ENCODE measurements at regions of chr4 and their contacts with region 1.

Region 1: DNA sequence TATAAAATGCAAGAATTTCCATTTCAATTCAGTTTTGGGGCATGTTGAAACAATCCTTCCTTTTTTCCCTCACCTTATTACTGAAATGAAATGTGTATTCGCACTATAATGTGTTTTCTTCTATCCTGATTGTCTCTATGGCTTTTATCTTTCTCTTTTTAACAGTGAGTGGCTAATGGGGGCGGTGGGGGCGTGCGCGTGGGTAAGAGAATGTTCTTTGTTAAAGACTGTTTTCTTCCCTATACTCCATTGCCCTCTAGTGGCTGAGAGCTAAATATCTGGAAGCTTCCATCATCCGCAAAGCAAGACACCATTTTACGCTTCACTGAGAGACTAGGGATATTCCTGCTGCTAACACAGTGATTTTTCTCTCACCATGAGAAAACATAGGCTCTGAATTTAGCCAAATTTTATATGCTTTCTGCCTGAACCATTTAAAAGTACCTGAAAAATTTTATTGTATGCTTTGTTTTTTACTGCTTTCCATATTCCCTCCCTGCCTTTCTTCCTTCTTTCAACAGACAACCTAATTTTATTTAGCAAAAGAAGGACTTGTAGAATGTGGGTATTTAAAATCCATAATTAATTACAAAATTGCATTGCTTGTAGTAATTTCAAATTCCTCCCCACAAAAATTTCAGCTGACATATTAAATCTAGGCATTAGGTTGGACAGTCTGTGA is 194.0 kb downstream of the GASK1B start:
- DNase-seq: peak; percentile 29
- H3K4me3 ChIP-seq: peak overlapping the region; percentile 31
- H3K27ac ChIP-seq: no peak overlapping the region
- H3K4me1 ChIP-seq: no peaks in the 10 kb centered on the region
- H3K27me3 ChIP-seq: no peaks in the 10 kb centered on the region
- CTCF ChIP-seq: peak; percentile 85

Region 2: DNA sequence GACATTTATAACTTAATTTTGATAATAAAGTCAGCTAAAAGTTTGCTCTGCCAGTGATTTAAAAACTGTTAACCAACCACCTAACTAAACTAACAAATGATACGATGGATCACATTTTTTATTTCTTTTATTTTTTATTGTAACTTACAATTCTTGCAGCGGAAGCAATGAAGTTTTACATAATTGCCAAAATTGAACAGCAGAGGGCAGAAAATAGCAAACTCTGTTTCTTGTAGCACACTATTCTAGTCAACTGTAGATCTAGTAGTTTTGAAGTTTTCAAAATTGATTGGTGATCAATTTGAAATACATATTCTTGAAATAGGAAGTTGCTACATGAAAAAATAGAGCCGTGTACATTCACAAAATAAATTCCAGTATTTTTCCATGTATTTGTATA is 761.1 kb before region 1 on chr4:
- intact Hi-C with region 1: loop called (anchors 5 kb)
- DNase-seq: no peak
- H3K4me3 ChIP-seq: no peak overlapping the region
- H3K27ac ChIP-seq: no peak overlapping the region
- H3K4me1 ChIP-seq: peaks cover 12% of the 10 kb centered on the region
- H3K27me3 ChIP-seq: peaks cover 50% of the 10 kb centered on the region
- CTCF ChIP-seq: peak; percentile 33

Region 3: GRCh38 chr4:157421365-157421764 is 557.5 kb before region 1 on chr4:
- intact Hi-C with region 1: no loop called
- DNase-seq: no peak
- H3K4me3 ChIP-seq: no peak overlapping the region
- H3K27ac ChIP-seq: no peak overlapping the region
- H3K4me1 ChIP-seq: no peaks in the 10 kb centered on the region
- H3K27me3 ChIP-seq: no peaks in the 10 kb centered on the region
- CTCF ChIP-seq: no peak

Region 4: DNA sequence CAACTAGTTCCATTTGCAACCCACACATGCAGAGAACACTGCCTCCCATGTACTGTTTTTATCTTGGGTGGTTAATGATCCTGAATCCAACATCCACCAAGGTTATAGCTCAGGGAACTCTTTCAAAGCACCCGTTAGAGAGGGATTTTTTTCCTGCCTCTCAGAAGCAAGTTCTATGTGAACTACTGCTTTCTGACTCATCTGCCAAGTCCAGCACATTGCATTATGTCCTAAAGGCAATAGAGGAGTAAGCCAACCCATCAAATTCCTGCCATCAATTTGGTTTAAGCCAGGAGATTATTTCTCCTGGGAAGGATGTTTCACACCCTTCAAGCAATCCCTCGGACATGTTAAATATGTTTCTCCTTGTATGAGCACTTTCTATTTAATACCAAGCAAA is 140.5 kb before region 1 on chr4:
- intact Hi-C with region 1: no loop called
- DNase-seq: no peak
- H3K4me3 ChIP-seq: no peak overlapping the region
- H3K27ac ChIP-seq: no peak overlapping the region
- H3K4me1 ChIP-seq: no peaks in the 10 kb centered on the region
- H3K27me3 ChIP-seq: no peaks in the 10 kb centered on the region
- CTCF ChIP-seq: no peak

Region 5: DNA sequence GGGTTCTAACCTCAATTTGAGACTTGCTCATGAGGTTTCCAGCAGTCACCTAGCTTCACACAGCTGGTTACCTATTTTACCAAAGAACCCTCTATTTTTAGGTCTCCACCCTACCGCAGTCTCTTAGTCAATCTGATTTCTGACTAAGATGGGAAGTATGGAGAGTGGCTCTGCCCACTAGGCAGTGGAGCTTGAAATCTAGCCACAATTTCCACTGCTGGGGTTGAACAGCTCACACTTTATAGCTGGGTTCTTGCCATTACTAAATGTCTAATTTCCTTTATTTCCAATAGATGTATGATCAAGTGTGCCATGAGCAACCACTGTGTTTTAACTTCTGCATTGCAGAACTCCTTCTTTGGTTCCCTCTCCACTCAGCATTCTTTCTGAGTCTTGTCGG is 150.9 kb after region 1 on chr4:
- intact Hi-C with region 1: no loop called
- DNase-seq: no peak
- H3K4me3 ChIP-seq: no peak overlapping the region
- H3K27ac ChIP-seq: no peak overlapping the region
- H3K4me1 ChIP-seq: peaks cover 43% of the 10 kb centered on the region
- H3K27me3 ChIP-seq: no peaks in the 10 kb centered on the region
- CTCF ChIP-seq: no peak